CD4-positive, alpha-beta memory T cell (primary cell): ENCODE measurements at regions of chr19 and their contacts with region 1.

Region 1: DNA sequence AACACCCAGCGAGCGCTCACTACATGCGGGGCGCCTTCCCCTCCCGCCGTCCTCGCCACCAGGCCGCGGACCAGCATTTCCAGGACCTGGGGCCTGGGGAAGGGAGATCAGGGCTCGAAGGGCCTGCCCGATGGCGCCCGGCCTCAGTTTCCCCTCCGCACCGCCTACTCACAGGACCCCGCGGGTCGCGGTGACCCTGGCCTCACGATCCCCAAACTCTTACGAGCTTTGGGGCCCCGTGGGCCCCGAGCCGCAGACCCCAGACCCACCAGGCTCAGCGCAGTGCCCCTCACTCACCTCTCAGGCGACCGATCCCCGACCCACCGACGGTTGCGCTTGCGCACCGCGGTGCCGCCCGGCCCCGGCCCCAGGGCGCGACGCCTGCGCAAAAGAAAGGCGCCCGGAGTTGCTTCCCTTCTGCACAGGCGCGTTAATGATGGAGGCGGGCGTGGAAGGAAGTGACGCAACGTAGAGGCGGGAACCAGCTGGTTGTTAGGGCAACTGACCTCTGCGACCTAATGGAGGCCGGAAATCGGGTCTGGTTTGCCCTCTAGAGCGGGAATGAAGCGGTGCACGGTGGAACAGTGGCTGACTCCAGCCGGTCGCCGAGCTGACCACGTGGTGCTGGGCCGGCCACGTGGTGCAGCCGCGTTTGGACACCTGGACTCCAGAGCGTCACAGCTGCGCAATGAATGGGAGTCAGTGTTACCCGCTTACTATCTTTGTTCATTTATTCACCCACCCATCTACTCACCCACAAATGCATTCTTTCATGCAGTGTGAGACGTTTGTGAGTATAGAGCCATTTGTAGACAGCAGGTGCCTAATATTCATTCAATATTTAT is at the start of gene SGTA:
- DNase-seq: peak; percentile 94 to 98 (median 97)
- H3K4me3 ChIP-seq: peak within 1 kb of the TSS; percentile 85 to 91
- H3K4me3 Mint-ChIP-seq: peak within 1 kb of the TSS; percentile 84 to 93 (median 90)
- H3K27ac ChIP-seq: peak within 1 kb of the TSS; percentile 93
- H3K27ac Mint-ChIP-seq: peak within 1 kb of the TSS; percentile 87 to 97 (median 96)
- H3K4me1 ChIP-seq: peaks cover 54% of the 10 kb centered on the region
- H3K4me1 Mint-ChIP-seq: peaks cover 26 to 69% (median 47%) of the 10 kb centered on the region in 4 donors
- H3K27me3 ChIP-seq: no peaks in the 10 kb centered on the region
- H3K27me3 Mint-ChIP-seq: no peaks in the 10 kb centered on the region
- total RNA-seq, gene SGTA: 37.0 to 37.8 TPM

Region 2: GRCh38 chr19:2524838-2525723 is 258.1 kb before region 1 on chr19:
- CTCF ChIA-PET with region 1: no interaction called
- POLR2A ChIA-PET with region 1: no interaction called
- intact Hi-C with region 1: no loop called
- DNase-seq: no peak
- H3K4me3 ChIP-seq: no peak overlapping the region
- H3K4me3 Mint-ChIP-seq: no peak overlapping the region
- H3K27ac ChIP-seq: no peak overlapping the region
- H3K27ac Mint-ChIP-seq: no peak overlapping the region
- H3K4me1 ChIP-seq: no peaks in the 10 kb centered on the region
- H3K4me1 Mint-ChIP-seq: no peaks in the 10 kb centered on the region
- H3K27me3 ChIP-seq: no peaks in the 10 kb centered on the region
- H3K27me3 Mint-ChIP-seq: no peaks in the 10 kb centered on the region

Region 3: DNA sequence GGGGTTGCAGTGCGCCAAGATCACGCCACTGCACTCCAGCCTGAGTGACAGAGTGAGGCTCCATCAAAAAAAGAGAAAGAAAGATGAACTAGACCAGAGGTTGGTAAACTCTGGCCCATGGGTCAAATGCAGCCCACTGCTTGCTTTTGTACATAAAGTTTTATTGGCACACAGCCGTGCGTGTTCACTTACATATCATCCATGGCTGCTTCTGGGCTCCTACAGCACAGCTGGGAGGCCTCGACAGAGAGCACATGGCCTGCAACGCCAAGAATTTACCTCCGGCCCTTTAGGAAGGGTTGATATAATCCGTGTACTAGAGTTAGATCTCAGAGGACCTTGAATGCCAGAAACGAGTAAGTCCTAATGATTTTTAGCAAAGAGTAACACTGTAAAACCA is 126.6 kb before region 1 on chr19:
- CTCF ChIA-PET with region 1: no interaction called
- POLR2A ChIA-PET with region 1: no interaction called
- intact Hi-C with region 1: no loop called
- DNase-seq: no peak
- H3K4me3 ChIP-seq: no peak overlapping the region
- H3K4me3 Mint-ChIP-seq: no peak overlapping the region
- H3K27ac ChIP-seq: no peak overlapping the region
- H3K27ac Mint-ChIP-seq: no peak overlapping the region
- H3K4me1 ChIP-seq: no peaks in the 10 kb centered on the region
- H3K4me1 Mint-ChIP-seq: no peaks in the 10 kb centered on the region
- H3K27me3 ChIP-seq: no peaks in the 10 kb centered on the region
- H3K27me3 Mint-ChIP-seq: peaks cover 0 to 2% of the 10 kb centered on the region in 2 donors

Region 4: GRCh38 chr19:2702162-2703076 is 80.7 kb before region 1 on chr19 and contains the start of gene GNG7:
- CTCF ChIA-PET with region 1: no interaction called
- POLR2A ChIA-PET with region 1: no interaction called
- intact Hi-C with region 1: loop called (anchors 1 kb)
- DNase-seq: peak; percentile 90 to 95 (median 95)
- H3K4me3 ChIP-seq: peak within 1 kb of the TSS in 1 of 2 donors; percentile 45
- H3K4me3 Mint-ChIP-seq: peak within 1 kb of the TSS; percentile 70 to 80 (median 76)
- H3K27ac ChIP-seq: peak within 1 kb of the TSS; percentile 26
- H3K27ac Mint-ChIP-seq: peak within 1 kb of the TSS; percentile 55 to 89 (median 67)
- H3K4me1 ChIP-seq: peaks cover 5% of the 10 kb centered on the region
- H3K4me1 Mint-ChIP-seq: peaks cover 20 to 38% (median 27%) of the 10 kb centered on the region in 4 donors
- H3K27me3 ChIP-seq: no peaks in the 10 kb centered on the region
- H3K27me3 Mint-ChIP-seq: no peaks in the 10 kb centered on the region
- total RNA-seq, gene GNG7: 4.1 to 4.2 TPM

Region 5: DNA sequence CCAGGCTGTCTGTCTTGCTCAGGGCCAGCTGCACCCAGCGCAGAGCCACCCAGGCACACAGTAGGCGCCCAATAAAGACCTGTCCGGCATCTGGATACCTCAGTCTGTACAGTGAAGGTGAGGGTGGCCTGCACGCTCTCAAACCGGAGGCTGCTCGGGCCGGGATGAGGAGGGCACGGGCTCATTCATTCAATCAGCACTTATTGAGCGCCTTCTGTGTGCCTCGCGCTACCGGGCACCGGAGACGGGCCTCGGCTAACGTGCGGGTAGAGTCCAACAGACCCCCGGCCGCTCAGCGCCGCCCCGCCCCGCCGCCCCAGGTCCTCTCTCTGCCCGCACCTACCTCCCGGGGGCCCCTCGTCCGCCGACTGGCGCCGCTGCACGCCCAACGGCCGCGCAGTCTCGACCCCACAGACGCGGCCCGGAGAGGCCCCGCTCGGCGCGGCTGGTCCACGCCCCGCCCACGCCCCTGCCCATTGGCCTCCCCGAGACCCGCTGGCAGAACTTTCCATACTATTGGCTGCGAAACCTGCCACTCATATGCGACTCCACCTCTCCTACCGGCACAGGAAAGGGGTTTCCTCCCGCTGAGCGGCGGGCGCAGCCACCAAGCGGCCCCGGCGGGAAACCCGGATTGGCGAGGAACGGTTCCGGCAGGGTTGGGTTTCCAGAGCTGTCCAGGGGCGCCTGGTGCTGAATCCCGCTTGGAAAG is 43.4 kb before region 1 on chr19 and contains the start of gene SLC39A3:
- CTCF ChIA-PET with region 1: interaction called, 4 read pairs
- POLR2A ChIA-PET with region 1: interaction called, 3 read pairs
- intact Hi-C with region 1: loop called (anchors 1 kb)
- DNase-seq: peak; percentile 97 to 99 (median 98)
- H3K4me3 ChIP-seq: peak within 1 kb of the TSS; percentile 57 to 73
- H3K4me3 Mint-ChIP-seq: peak within 1 kb of the TSS; percentile 80 to 90 (median 87)
- H3K27ac ChIP-seq: peak within 1 kb of the TSS; percentile 52
- H3K27ac Mint-ChIP-seq: peak within 1 kb of the TSS; percentile 29 to 80 (median 75)
- H3K4me1 ChIP-seq: peaks cover 18% of the 10 kb centered on the region
- H3K4me1 Mint-ChIP-seq: peaks cover 12 to 39% (median 17%) of the 10 kb centered on the region in 4 donors
- H3K27me3 ChIP-seq: peaks cover 4% of the 10 kb centered on the region
- H3K27me3 Mint-ChIP-seq: peaks cover 2 to 12% of the 10 kb centered on the region in 2 donors
- total RNA-seq, gene SLC39A3: 18.2 to 19.1 TPM

Region 6: GRCh38 chr19:2761891-2762755 is 21.0 kb before region 1 on chr19:
- CTCF ChIA-PET with region 1: no interaction called
- POLR2A ChIA-PET with region 1: no interaction called
- intact Hi-C with region 1: no loop called
- DNase-seq: no peak
- H3K4me3 ChIP-seq: no peak overlapping the region
- H3K4me3 Mint-ChIP-seq: no peak overlapping the region
- H3K27ac ChIP-seq: no peak overlapping the region
- H3K27ac Mint-ChIP-seq: peak overlapping the region in 1 of 7 donors; percentile 32
- H3K4me1 ChIP-seq: peaks cover 5% of the 10 kb centered on the region
- H3K4me1 Mint-ChIP-seq: peaks cover 0 to 10% (median 3%) of the 10 kb centered on the region in 4 donors
- H3K27me3 ChIP-seq: no peaks in the 10 kb centered on the region
- H3K27me3 Mint-ChIP-seq: no peaks in the 10 kb centered on the region

Region 7: GRCh38 chr19:2820112-2820702 is 37.0 kb after region 1 on chr19:
- CTCF ChIA-PET with region 1: interaction called, 4 read pairs
- POLR2A ChIA-PET with region 1: interaction called, 3 read pairs
- intact Hi-C with region 1: loop called (anchors 1 kb)
- DNase-seq: no peak
- H3K4me3 ChIP-seq: peak overlapping the region; percentile 51 to 69
- H3K4me3 Mint-ChIP-seq: peak overlapping the region; percentile 76 to 87 (median 84)
- H3K27ac ChIP-seq: peak overlapping the region; percentile 33
- H3K27ac Mint-ChIP-seq: peak overlapping the region in 1 of 7 donors; percentile 70
- H3K4me1 ChIP-seq: peaks cover 8% of the 10 kb centered on the region
- H3K4me1 Mint-ChIP-seq: peaks cover 4 to 18% (median 4%) of the 10 kb centered on the region in 4 donors
- H3K27me3 ChIP-seq: no peaks in the 10 kb centered on the region
- H3K27me3 Mint-ChIP-seq: no peaks in the 10 kb centered on the region

Region 8: GRCh38 chr19:2856457-2857050 is 73.4 kb after region 1 on chr19:
- CTCF ChIA-PET with region 1: no interaction called
- POLR2A ChIA-PET with region 1: no interaction called
- intact Hi-C with region 1: no loop called
- DNase-seq: peak; percentile 44 to 73 (median 68)
- H3K4me3 ChIP-seq: no peak overlapping the region
- H3K4me3 Mint-ChIP-seq: peak overlapping the region in 7 of 8 donors; percentile 18 to 73 (median 70)
- H3K27ac ChIP-seq: peak overlapping the region; percentile 3
- H3K27ac Mint-ChIP-seq: peak overlapping the region; percentile 49 to 91 (median 68)
- H3K4me1 ChIP-seq: peaks cover 26% of the 10 kb centered on the region
- H3K4me1 Mint-ChIP-seq: peaks cover 13 to 32% (median 21%) of the 10 kb centered on the region in 4 donors
- H3K27me3 ChIP-seq: no peaks in the 10 kb centered on the region
- H3K27me3 Mint-ChIP-seq: no peaks in the 10 kb centered on the region

Region 9: GRCh38 chr19:2900296-2901252 is 117.4 kb after region 1 on chr19 and contains the start of gene ZNF57:
- CTCF ChIA-PET with region 1: no interaction called
- POLR2A ChIA-PET with region 1: no interaction called
- intact Hi-C with region 1: loop called (anchors 1 kb)
- DNase-seq: peak; percentile 92 to 98 (median 97)
- H3K4me3 ChIP-seq: peak within 1 kb of the TSS; percentile 52 to 90
- H3K4me3 Mint-ChIP-seq: peak within 1 kb of the TSS; percentile 93 to 100 (median 96)
- H3K27ac ChIP-seq: peak within 1 kb of the TSS; percentile 47
- H3K27ac Mint-ChIP-seq: peak within 1 kb of the TSS; percentile 81 to 94 (median 92)
- H3K4me1 ChIP-seq: peaks cover 15% of the 10 kb centered on the region
- H3K4me1 Mint-ChIP-seq: peaks cover 15 to 29% (median 20%) of the 10 kb centered on the region in 4 donors
- H3K27me3 ChIP-seq: no peaks in the 10 kb centered on the region
- H3K27me3 Mint-ChIP-seq: no peaks in the 10 kb centered on the region
- total RNA-seq, gene ZNF57: 4.2 to 4.7 TPM

Region 10: DNA sequence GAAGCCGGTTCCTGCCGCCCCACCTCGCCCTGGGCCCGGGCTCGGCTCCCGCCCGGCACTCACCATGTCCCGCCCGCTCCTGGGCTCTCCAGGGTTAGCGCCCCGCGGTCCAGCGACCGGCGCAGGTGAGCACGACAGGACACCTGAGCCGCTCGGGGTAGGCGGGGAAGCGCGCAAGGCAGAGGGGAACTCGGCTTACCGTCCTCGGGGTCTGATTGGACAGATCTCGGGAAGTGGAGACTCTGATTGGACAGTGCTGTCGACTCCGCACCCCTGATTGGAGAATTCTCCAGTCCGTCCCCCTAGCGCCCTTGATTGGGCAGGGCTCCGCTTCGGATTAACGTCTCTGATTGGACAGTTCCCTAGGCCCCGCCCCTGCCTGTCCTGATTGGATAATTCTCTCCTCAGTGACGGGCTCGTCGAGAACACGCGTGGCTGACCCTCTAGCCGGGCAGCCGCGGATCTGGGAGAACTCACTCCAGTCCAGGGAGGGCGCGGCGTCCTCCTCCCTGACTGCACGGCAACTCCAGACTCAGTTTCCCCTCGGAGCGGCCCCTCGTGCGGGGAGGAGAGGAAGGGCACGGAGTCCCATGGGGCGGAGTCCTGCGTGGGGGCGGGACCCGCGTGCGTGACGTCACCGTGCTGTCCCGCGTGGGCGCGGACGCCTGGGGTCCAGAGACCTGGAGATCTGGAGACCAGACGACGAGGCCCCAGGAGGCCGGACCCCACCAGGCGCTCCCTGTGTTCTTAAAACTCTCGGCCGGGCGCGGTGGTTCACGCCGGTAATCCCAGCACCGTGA is 161.8 kb after region 1 on chr19 and contains the start of gene ZNF77:
- CTCF ChIA-PET with region 1: no interaction called
- POLR2A ChIA-PET with region 1: interaction called, 3 read pairs
- intact Hi-C with region 1: loop called (anchors 10 kb)
- DNase-seq: peak; percentile 98 to 99 (median 99)
- H3K4me3 ChIP-seq: peak within 1 kb of the TSS; percentile 81 to 84
- H3K4me3 Mint-ChIP-seq: peak within 1 kb of the TSS; percentile 95 to 98 (median 97)
- H3K27ac ChIP-seq: peak within 1 kb of the TSS; percentile 64
- H3K27ac Mint-ChIP-seq: peak within 1 kb of the TSS; percentile 94 to 99 (median 99)
- H3K4me1 ChIP-seq: peaks cover 27% of the 10 kb centered on the region
- H3K4me1 Mint-ChIP-seq: peaks cover 17 to 45% (median 27%) of the 10 kb centered on the region in 4 donors
- H3K27me3 ChIP-seq: no peaks in the 10 kb centered on the region
- H3K27me3 Mint-ChIP-seq: no peaks in the 10 kb centered on the region
- total RNA-seq, gene ZNF77: 5.8 to 6.4 TPM